Activated naive CD4-positive, alpha-beta T cell treated with anti-CD3 and anti-CD28 coated beads for 36 hours (primary cell): ENCODE measurements at regions of chr10 and their contacts with region 1.

Region 1: DNA sequence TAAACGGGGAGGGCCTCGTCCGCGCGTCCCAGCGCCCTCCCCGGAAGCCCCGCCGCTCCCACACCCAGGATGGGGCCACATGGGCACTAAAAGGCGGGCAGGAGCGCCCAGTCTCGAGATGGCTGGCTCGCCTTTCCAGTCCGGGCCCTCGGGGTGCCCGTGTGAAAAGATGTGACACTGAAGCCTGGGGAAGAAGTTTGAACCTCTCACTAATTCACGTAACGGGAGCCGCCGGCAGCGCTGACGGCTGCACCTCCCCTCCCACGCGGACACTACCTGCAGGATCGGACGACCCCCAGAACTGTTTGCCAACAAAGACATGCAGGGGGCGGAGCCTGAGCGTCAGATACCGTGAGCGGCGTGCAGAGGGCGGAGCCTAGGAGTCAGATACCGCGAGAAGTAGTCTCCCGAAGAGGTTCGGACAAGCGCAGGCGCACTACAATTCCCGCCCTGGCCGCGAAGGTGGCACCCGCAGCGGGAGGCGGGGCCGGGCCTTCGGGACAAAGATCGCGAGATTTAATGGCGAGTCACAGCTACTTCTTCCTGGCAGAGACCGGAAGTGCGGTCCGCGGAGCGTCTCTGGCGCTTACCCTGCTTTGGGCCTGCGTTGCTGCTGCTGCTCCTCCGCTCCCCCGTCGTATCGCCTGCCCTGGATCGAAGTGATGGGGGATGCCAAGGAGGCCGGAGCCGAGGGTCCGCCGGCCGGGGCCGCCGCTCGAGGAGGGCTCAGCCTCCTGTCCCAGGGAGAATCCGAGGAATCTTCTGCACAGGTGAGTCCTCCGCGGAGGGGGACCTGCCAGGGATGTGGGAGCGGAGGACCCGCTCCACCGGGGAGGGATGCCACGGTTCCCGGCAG is at the start of gene EDRF1:
- DNase-seq: peak; percentile 99
- H3K4me3 Mint-ChIP-seq: peak within 1 kb of the TSS; percentile 88
- H3K27ac Mint-ChIP-seq: peak within 1 kb of the TSS; percentile 98
- H3K4me1 Mint-ChIP-seq: peaks cover 30% of the 10 kb centered on the region
- H3K27me3 Mint-ChIP-seq: no peaks in the 10 kb centered on the region
- total RNA-seq, gene EDRF1: 24.0 to 25.0 TPM

Region 2: GRCh38 chr10:124418726-124419501 is 1300.5 kb before region 1 on chr10 and contains the start of gene OAT:
- CTCF ChIA-PET with region 1: no interaction called
- intact Hi-C with region 1: loop called (anchors 5 kb)
- DNase-seq: peak; percentile 98
- H3K4me3 Mint-ChIP-seq: peak within 1 kb of the TSS; percentile 76
- H3K27ac Mint-ChIP-seq: no peak within 1 kb of the TSS
- H3K4me1 Mint-ChIP-seq: peaks cover 25% of the 10 kb centered on the region
- H3K27me3 Mint-ChIP-seq: no peaks in the 10 kb centered on the region
- total RNA-seq, gene OAT: 37.4 to 41.6 TPM

Region 3: GRCh38 chr10:125822878-125823662 is 103.7 kb after region 1 on chr10 and contains the starts of genes BCCIP and UROS:
- CTCF ChIA-PET with region 1: no interaction called
- intact Hi-C with region 1: loop called (anchors 1 kb)
- DNase-seq: peak; percentile 90
- H3K4me3 Mint-ChIP-seq: peak within 1 kb of the TSS; percentile 75
- H3K27ac Mint-ChIP-seq: peak within 1 kb of the TSS; percentile 66
- H3K4me1 Mint-ChIP-seq: peaks cover 28% of the 10 kb centered on the region
- H3K27me3 Mint-ChIP-seq: no peaks in the 10 kb centered on the region
- total RNA-seq, gene BCCIP: 103 to 107 TPM
- total RNA-seq, gene UROS: 30.8 to 32.9 TPM

Region 4: DNA sequence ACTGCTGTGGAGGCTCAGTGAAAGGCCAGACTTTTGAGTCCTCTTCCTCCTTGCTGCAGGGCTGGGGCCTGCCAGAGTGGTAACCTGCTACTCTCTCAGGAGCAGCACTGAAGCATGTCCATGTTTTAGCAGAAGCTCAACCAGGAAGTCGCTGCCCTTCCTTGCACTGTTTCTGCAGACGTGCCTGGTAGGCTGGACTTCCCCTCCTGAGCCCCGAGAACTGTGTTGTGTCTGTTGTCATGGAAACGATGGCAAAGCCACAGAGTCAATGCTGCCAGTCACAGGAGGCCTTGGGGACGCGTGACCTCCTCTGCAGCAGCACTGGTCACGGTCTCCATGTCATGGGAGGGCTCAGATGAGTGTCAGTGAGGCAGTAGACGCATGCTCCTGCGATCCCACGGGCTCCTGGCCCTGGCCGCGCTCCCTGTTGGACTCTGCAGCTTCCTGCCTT is 322.4 kb after region 1 on chr10:
- CTCF ChIA-PET with region 1: no interaction called
- intact Hi-C with region 1: loop called (anchors 1 kb)
- DNase-seq: peak; percentile 84
- H3K4me3 Mint-ChIP-seq: no peak overlapping the region
- H3K27ac Mint-ChIP-seq: no peak overlapping the region
- H3K4me1 Mint-ChIP-seq: peaks cover 10% of the 10 kb centered on the region
- H3K27me3 Mint-ChIP-seq: peaks cover 2% of the 10 kb centered on the region